Psoas muscle (tissue), 8 donors: ENCODE measurements at regions of chr16 and their contacts with region 1.

Region 1: GRCh38 chr16:13550254-13550653 is 369.7 kb upstream of the ERCC4 start:
- DNase-seq: no peak
- ATAC-seq: no peak
- H3K4me3 ChIP-seq: no peak overlapping the region
- H3K27ac ChIP-seq: no peak overlapping the region
- H3K4me1 ChIP-seq: no peaks in the 10 kb centered on the region
- H3K27me3 ChIP-seq: no peaks in the 10 kb centered on the region
- CTCF ChIP-seq: no peak

Region 2: GRCh38 chr16:13492046-13492445 is 58.2 kb before region 1 on chr16:
- intact Hi-C with region 1: loop called in 1 of 2 experiments (anchors 2 kb)
- DNase-seq: no peak
- ATAC-seq: no peak
- H3K4me3 ChIP-seq: no peak overlapping the region
- H3K27ac ChIP-seq: no peak overlapping the region
- H3K4me1 ChIP-seq: no peaks in the 10 kb centered on the region
- H3K27me3 ChIP-seq: peaks cover 0 to 3% (median 0%) of the 10 kb centered on the region in 3 donors
- CTCF ChIP-seq: no peak

Region 3: DNA sequence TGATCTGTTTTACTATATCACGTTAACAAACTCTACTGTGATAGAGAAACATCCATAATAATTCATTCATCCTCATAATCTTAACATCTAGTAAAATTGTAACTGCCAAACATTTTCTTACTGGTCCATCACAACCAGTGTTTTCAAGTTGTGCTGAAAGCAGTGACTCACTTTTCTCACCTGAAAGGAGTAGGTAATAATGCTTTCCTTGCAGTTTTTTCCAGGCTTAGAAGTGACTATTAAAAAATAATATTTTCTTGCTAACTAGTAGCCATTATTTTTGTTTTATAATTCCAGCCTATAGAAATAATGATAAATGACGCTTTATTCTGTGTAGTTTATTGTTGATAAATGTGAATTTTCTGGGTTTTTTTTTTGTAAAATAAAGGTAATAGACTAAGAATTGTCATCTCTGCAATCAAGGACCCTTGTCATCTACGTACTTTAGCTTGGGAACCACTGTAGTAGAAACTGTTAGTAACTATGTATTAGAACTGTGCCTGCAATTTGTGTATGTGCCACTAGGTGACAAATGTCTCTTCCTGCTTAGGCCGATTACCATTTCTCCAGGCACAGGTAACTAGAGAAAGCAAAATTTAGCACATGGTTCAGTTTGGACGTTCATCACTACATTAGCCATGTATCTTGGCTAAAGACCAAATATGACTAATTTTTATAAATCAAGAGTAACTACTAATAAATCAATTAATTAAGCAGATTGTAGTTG is 39.7 kb before region 1 on chr16:
- intact Hi-C with region 1: no loop called
- DNase-seq: no peak
- ATAC-seq: no peak
- H3K4me3 ChIP-seq: no peak overlapping the region
- H3K27ac ChIP-seq: no peak overlapping the region
- H3K4me1 ChIP-seq: no peaks in the 10 kb centered on the region
- H3K27me3 ChIP-seq: no peaks in the 10 kb centered on the region
- CTCF ChIP-seq: no peak

Region 4: DNA sequence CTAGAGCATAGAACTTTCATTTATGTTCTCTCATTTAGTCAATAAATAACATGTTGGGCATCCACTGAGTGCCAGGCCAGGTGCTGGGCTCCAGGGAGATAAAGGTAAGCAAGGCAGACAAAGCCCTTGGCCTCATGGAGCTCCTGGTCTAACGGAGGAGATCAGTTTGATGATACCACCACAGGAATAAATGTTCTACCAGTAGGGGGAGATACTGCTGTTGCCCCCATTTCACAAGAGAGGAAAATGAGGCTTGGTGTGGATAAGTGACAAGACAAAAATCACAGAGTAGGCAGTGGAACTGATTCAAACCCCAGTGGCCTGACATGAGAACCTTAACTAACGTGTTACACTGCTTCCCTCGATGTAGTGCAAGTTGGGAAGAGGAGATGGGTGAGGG is 289.3 kb after region 1 on chr16:
- intact Hi-C with region 1: no loop called
- DNase-seq: no peak
- ATAC-seq: no peak
- H3K4me3 ChIP-seq: no peak overlapping the region
- H3K27ac ChIP-seq: no peak overlapping the region
- H3K4me1 ChIP-seq: no peaks in the 10 kb centered on the region
- H3K27me3 ChIP-seq: peaks cover 0 to 3% (median 0%) of the 10 kb centered on the region in 3 donors
- CTCF ChIP-seq: no peak